ENCODE measurements at regions of chr6 and their contacts with region 1.

Region 1: GRCh38 chr6:2940010-2940850 is 31.1 kb downstream of the SERPINB6 start:
- DNase-seq: peak; percentile 95
- H3K4me3 Mint-ChIP-seq: peak overlapping the region; percentile 2
- H3K27ac Mint-ChIP-seq: peak overlapping the region; percentile 97
- H3K4me1 Mint-ChIP-seq: peaks cover 69% of the 10 kb centered on the region
- H3K27me3 Mint-ChIP-seq: no peaks in the 10 kb centered on the region

Region 2: GRCh38 chr6:2111162-2111677 is 829.0 kb before region 1 on chr6:
- CTCF ChIA-PET with region 1: no interaction called
- intact Hi-C with region 1: loop called (anchors 2 kb)
- DNase-seq: peak; percentile 14
- H3K4me3 Mint-ChIP-seq: peak overlapping the region; percentile 45
- H3K27ac Mint-ChIP-seq: peak overlapping the region; percentile 88
- H3K4me1 Mint-ChIP-seq: peaks cover 36% of the 10 kb centered on the region
- H3K27me3 Mint-ChIP-seq: no peaks in the 10 kb centered on the region

Region 3: GRCh38 chr6:2841264-2842138 is 98.7 kb before region 1 on chr6 and contains the start of gene SERPINB1:
- CTCF ChIA-PET with region 1: interaction called, 177 read pairs
- intact Hi-C with region 1: loop called (anchors 1 kb)
- DNase-seq: peak; percentile 94
- H3K4me3 Mint-ChIP-seq: peak within 1 kb of the TSS; percentile 81
- H3K27ac Mint-ChIP-seq: peak within 1 kb of the TSS; percentile 87
- H3K4me1 Mint-ChIP-seq: peaks cover 61% of the 10 kb centered on the region
- H3K27me3 Mint-ChIP-seq: no peaks in the 10 kb centered on the region
- total RNA-seq, gene SERPINB1: 200 to 208 TPM

Region 4: GRCh38 chr6:2862712-2863181 is 77.5 kb before region 1 on chr6:
- CTCF ChIA-PET with region 1: interaction called, 4 read pairs
- intact Hi-C with region 1: loop called (anchors 1 kb)
- DNase-seq: peak; percentile 73
- H3K4me3 Mint-ChIP-seq: peak overlapping the region; percentile 66
- H3K27ac Mint-ChIP-seq: peak overlapping the region; percentile 96
- H3K4me1 Mint-ChIP-seq: peaks cover 66% of the 10 kb centered on the region
- H3K27me3 Mint-ChIP-seq: no peaks in the 10 kb centered on the region

Region 5: DNA sequence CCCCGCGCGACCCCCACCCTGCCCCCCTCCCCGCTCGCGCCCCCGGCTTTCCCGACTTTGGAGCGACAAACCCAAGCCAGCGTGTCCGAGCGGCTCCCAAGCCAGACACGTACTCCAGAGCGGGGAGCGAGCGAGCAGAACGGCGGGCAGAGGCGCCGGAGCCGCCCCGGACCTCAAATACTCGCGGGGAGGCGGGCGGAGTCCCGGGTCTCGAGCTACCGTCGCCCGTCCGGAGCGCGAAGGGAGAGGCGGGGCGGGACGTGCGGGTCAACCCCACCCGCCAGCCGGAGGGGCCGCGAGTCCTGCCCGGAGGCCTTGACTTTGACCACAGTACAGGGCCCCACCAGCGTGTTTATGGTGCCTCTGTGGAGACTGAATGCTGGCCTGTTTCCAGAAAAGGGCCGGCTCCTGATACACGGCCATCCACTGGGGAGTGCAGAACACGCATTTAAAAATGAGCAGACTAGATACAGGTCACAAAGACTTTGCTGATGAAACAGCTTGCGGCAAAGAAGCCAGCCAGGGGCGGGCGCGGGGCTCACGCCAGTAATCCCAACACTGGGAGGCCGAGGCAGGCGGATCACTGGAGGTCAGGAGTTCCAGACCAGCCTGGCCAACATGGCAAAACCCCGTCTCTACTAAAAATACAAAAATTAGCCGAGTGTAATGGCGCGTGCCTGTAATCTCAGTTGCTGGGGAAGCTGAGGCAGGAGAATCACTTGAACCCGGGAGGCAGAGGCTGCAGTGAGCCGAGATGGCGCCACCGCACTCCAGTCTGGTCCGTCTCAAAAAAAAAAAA is 31.4 kb after region 1 on chr6 and contains the start of gene SERPINB6:
- CTCF ChIA-PET with region 1: no interaction called
- intact Hi-C with region 1: loop called (anchors 1 kb)
- DNase-seq: peak; percentile 39
- H3K4me3 Mint-ChIP-seq: peak within 1 kb of the TSS; percentile 82
- H3K27ac Mint-ChIP-seq: peak within 1 kb of the TSS; percentile 84
- H3K4me1 Mint-ChIP-seq: peaks cover 36% of the 10 kb centered on the region
- H3K27me3 Mint-ChIP-seq: peaks cover 4% of the 10 kb centered on the region
- total RNA-seq, gene SERPINB6: 31.2 to 31.4 TPM

Region 6: GRCh38 chr6:3026791-3027626 is 86.8 kb after region 1 on chr6:
- CTCF ChIA-PET with region 1: no interaction called
- intact Hi-C with region 1: no loop called
- DNase-seq: peak; percentile 38
- H3K4me3 Mint-ChIP-seq: peak overlapping the region; percentile 50
- H3K27ac Mint-ChIP-seq: peak overlapping the region; percentile 84
- H3K4me1 Mint-ChIP-seq: peaks cover 47% of the 10 kb centered on the region
- H3K27me3 Mint-ChIP-seq: no peaks in the 10 kb centered on the region

Region 7: GRCh38 chr6:3118353-3119039 is 178.3 kb after region 1 on chr6 and contains the start of gene BPHL:
- CTCF ChIA-PET with region 1: no interaction called
- intact Hi-C with region 1: loop called (anchors 1 kb)
- DNase-seq: peak; percentile 99
- H3K4me3 Mint-ChIP-seq: peak within 1 kb of the TSS; percentile 83
- H3K27ac Mint-ChIP-seq: peak within 1 kb of the TSS; percentile 78
- H3K4me1 Mint-ChIP-seq: peaks cover 21% of the 10 kb centered on the region
- H3K27me3 Mint-ChIP-seq: no peaks in the 10 kb centered on the region
- total RNA-seq, gene BPHL: 6.9 to 7.5 TPM

Measured in activated naive CD4-positive, alpha-beta T cell treated with anti-CD3 and anti-CD28 coated beads for 36 hours (primary cell).